ENCODE measurements at regions of chr11 and their contacts with region 1.

Region 1: DNA sequence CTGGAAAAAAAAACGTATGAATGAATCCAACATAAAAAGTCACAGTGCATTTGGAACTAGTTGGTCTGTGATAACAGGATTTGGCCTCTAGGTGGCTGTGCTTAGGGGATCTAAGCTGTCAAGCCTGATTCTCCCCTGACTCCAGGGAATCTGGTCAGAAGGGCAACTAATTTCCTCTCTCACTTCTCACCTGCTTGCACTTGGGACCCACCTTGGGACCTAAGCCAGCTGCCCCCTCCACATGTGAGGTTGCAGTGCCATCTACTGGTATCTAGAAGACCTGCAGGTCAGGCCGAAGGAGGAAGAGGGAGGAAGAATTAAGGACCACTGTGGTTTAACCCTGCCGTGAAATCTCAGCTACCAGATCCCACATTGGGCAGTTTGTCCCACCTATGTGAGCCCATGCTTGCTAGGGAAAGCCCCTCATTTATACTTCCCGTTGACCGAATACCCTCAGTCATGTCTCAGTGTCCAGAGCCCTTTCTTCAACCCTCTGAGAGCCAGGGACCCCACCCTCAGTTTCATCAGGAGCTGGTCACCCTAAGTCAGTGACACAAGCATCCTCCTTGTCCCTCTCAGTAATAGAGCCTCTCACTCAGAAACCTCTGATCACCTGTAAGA is 33.2 kb upstream of the CAVIN3 start:
- DNase-seq: peak; percentile 28 to 76 (median 42)
- ATAC-seq: peak; percentile 74
- H3K4me3 ChIP-seq: no peak overlapping the region
- H3K4me3 Mint-ChIP-seq: no peak overlapping the region
- H3K27ac ChIP-seq: no peak overlapping the region
- H3K27ac Mint-ChIP-seq: no peak overlapping the region
- H3K4me1 ChIP-seq: peaks cover 5% of the 10 kb centered on the region
- H3K4me1 Mint-ChIP-seq: no peaks in the 10 kb centered on the region
- H3K27me3 ChIP-seq: no peaks in the 10 kb centered on the region
- H3K27me3 Mint-ChIP-seq: no peaks in the 10 kb centered on the region
- CTCF ChIP-seq: peak; percentile 96

Region 2: DNA sequence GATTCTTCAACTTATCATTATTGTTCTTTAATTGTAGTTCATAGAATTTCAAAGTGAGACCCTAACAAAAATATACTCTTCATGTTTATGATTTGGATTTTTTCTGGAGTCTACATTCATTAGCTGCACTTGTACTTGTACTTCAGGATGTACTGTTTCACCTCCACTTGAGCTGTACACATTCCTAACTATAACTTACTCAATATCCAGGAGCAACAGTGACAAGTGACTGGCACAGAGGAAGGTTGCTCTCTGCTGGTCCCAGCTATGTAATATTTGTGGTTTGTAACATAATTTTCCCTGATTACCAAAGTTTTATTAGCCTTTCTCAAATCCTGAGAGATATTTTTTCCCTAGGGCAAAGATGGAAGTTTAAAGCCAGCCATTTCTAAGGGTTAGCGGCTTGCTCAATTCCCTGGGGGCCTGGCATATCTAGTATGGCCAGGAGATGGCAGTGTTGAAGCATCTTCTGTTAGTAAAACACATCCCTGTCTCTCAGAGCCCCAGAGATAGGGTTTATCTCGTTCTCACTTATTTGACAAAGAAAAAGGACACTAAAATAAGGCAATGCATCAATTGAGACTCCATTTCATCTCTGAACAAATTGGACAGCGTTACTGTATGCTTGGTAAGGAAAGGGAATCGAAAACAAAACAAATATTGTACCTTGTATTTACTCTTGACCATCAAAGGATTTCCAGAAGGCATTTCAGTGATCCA is 1229.5 kb before region 1 on chr11:
- CTCF ChIA-PET with region 1: interaction called, 5 read pairs
- POLR2A ChIA-PET with region 1: no interaction called
- intact Hi-C with region 1: loop called (anchors 5 kb)
- DNase-seq: peak; percentile 3 to 61 (median 18)
- ATAC-seq: no peak
- H3K4me3 ChIP-seq: no peak overlapping the region
- H3K4me3 Mint-ChIP-seq: no peak overlapping the region
- H3K27ac ChIP-seq: no peak overlapping the region
- H3K27ac Mint-ChIP-seq: no peak overlapping the region
- H3K4me1 ChIP-seq: no peaks in the 10 kb centered on the region
- H3K4me1 Mint-ChIP-seq: no peaks in the 10 kb centered on the region
- H3K27me3 ChIP-seq: peaks cover 0 to 7% of the 10 kb centered on the region in 2 experiments
- H3K27me3 Mint-ChIP-seq: peaks cover 18% of the 10 kb centered on the region
- CTCF ChIP-seq: peak; percentile 71

Region 3: DNA sequence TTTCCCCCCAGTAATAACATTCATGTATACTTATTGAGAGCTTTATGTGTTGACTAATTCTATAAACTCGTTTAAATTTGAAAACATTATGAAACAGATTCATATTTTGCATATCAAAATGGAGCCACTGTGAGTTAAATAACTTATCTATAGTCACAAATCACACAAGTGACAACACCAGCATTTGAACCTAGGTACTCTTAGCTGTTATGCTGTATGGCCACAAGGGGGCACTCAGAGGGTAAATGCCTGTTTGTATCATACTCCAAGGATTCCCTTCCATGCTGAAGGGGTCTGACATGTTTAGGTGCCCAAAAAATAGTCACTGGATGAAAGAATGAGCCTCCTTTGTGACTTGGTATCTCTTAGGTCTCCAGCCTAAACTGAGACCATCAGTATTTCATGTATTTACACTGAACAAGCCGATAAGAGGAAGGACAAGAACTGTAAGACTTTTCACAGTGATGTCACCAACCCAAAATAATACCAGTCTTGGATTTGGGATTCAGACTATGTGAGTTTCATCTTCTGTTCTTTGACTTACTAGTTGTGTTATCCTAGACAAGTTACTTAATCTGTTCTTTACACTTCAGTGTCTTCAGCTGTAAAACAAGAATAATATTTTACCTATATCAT is 877.2 kb before region 1 on chr11:
- CTCF ChIA-PET with region 1: no interaction called
- POLR2A ChIA-PET with region 1: no interaction called
- intact Hi-C with region 1: loop called in 1 of 2 experiments (anchors 5 kb)
- DNase-seq: peak in 13 of 14 experiments; percentile 2 to 64 (median 7)
- ATAC-seq: no peak
- H3K4me3 ChIP-seq: no peak overlapping the region
- H3K4me3 Mint-ChIP-seq: no peak overlapping the region
- H3K27ac ChIP-seq: no peak overlapping the region
- H3K27ac Mint-ChIP-seq: no peak overlapping the region
- H3K4me1 ChIP-seq: no peaks in the 10 kb centered on the region
- H3K4me1 Mint-ChIP-seq: no peaks in the 10 kb centered on the region
- H3K27me3 ChIP-seq: peaks cover 5 to 7% of the 10 kb centered on the region in 2 experiments
- H3K27me3 Mint-ChIP-seq: peaks cover 33% of the 10 kb centered on the region
- CTCF ChIP-seq: peak; percentile 73

Region 4: GRCh38 chr11:6022956-6023355 is 330.5 kb before region 1 on chr11:
- CTCF ChIA-PET with region 1: interaction called, 3 read pairs
- POLR2A ChIA-PET with region 1: no interaction called
- intact Hi-C with region 1: loop called in 1 of 2 experiments (anchors 2 kb)
- DNase-seq: peak in 4 of 14 experiments; percentile 13 to 63 (median 54)
- ATAC-seq: peak; percentile 43
- H3K4me3 ChIP-seq: no peak overlapping the region
- H3K4me3 Mint-ChIP-seq: no peak overlapping the region
- H3K27ac ChIP-seq: no peak overlapping the region
- H3K27ac Mint-ChIP-seq: no peak overlapping the region
- H3K4me1 ChIP-seq: no peaks in the 10 kb centered on the region
- H3K4me1 Mint-ChIP-seq: no peaks in the 10 kb centered on the region
- H3K27me3 ChIP-seq: peaks cover 4 to 6% of the 10 kb centered on the region in 2 experiments
- H3K27me3 Mint-ChIP-seq: peaks cover 57% of the 10 kb centered on the region
- CTCF ChIP-seq: peak; percentile 41

Region 5: DNA sequence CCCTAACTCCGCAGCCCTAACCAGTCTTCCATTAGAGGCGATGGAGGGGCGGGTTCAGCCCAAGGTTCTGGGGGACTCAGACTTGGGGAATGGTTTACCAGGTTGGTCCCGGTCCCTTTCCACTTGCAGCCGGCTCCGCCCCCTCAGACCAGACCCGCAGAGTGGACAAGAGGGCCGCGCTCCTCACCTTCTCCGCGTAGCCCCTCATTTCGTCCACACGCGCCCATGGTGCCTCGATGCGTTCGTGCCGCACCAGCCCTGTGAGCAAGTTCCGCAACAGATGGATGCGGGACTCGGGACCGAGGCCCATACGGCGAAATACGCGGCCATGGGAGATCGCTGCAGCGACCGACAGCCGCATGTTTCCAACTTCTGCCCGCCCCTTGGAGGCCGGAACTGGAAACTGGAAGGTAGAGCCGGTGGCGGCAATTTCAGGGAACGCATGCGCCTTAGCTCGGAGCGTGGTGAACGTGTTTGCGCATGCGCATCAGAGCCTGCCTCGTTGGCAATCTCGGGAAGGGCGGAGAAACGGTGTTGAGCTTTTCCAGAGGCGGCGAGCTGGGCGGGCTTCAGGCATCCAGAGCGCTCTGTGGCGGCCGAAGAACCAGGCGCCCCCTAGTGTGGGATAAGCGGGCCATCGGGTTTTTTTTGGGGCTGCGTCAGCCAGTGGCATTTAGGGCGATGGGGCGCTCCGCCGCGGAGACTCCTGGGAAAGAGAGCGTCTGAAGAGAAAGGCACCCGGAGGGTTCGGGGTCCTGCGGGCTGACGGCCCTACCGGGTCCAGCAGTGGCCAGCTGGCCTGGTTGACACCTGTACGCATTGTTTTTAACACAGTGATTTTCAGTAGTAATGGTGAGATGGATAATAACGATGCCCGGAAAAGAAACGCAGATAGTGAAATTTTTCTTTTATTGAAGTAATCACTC is 329.7 kb after region 1 on chr11 and contains the start of gene MRPL17:
- CTCF ChIA-PET with region 1: no interaction called
- POLR2A ChIA-PET with region 1: no interaction called
- intact Hi-C with region 1: no loop called
- DNase-seq: peak; percentile 96 to 100 (median 99)
- ATAC-seq: peak; percentile 94
- H3K4me3 ChIP-seq: peak within 1 kb of the TSS; percentile 75
- H3K4me3 Mint-ChIP-seq: peak within 1 kb of the TSS; percentile 98
- H3K27ac ChIP-seq: peak within 1 kb of the TSS; percentile 76 to 86
- H3K27ac Mint-ChIP-seq: peak within 1 kb of the TSS; percentile 94
- H3K4me1 ChIP-seq: peaks cover 17% of the 10 kb centered on the region
- H3K4me1 Mint-ChIP-seq: peaks cover 43% of the 10 kb centered on the region
- H3K27me3 ChIP-seq: no peaks in the 10 kb centered on the region
- H3K27me3 Mint-ChIP-seq: no peaks in the 10 kb centered on the region
- CTCF ChIP-seq: peak; percentile 78
- total RNA-seq, gene MRPL17: 12.3 to 14.2 TPM

Measured in CD4-positive, alpha-beta T cell (primary cell).